ENCODE measurements at regions of chr2 and their contacts with region 1.

Region 1: GRCh38 chr2:75574114-75574513 is 13.4 kb upstream of the EVA1A start:
- DNase-seq: peak; percentile 20
- ATAC-seq: peak; percentile 69
- H3K4me3 ChIP-seq: no peak overlapping the region
- H3K27ac ChIP-seq: no peak overlapping the region
- H3K4me1 ChIP-seq: peaks cover 8% of the 10 kb centered on the region
- H3K27me3 ChIP-seq: no peaks in the 10 kb centered on the region
- CTCF ChIP-seq: peak; percentile 40
- POLR2A ChIP-seq: no peak
- RAD21 ChIP-seq: peak; percentile 37; the same call in 1 of the 2 replicates

Region 2: DNA sequence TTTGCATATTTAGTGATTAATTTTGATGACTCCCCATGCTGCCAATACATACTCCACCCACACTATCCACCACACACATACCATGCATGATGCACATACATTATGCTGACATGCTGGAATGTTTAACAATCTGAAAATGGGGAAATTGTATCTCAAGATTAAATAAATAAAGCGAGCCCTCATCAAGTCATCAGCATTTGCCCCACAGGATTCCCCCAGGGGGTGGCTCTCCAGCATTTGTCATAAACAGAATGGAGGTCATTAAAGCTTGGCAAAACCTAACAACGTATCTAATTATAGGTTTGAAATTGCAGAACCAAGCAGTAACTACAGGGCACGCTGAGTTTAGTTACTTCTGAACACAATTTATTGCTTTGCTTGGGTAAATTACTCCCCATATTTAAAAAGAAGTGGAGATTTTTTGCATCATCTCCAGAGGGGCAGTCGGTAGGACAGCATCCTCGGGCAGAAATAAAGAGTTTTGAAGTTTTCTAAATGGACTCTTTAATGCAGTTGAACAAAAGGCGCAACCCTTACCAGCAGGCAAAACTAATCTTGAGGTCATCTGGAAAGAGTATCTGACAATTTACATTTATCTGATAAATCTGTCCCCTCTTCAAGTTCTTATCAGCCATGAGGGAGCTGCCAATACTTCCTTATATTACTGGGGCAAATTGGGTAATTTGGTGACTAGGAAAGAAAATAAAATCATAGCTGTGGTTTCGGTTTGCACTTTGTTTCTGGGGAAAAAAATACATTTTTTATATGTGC is 233.4 kb before region 1 on chr2:
- CTCF ChIA-PET with region 1: no interaction called
- POLR2A ChIA-PET with region 1: no interaction called
- dilution Hi-C with region 1: no loop called
- in situ Hi-C with region 1: no loop called
- intact Hi-C with region 1: no loop called
- DNase-seq: peak; percentile 42
- ATAC-seq: peak; percentile 79
- H3K4me3 ChIP-seq: no peak overlapping the region
- H3K27ac ChIP-seq: no peak overlapping the region
- H3K4me1 ChIP-seq: no peaks in the 10 kb centered on the region; the same call in 1 of the 2 replicates
- H3K27me3 ChIP-seq: no peaks in the 10 kb centered on the region
- CTCF ChIP-seq: no peak
- POLR2A ChIP-seq: no peak
- RAD21 ChIP-seq: no peak

Region 3: DNA sequence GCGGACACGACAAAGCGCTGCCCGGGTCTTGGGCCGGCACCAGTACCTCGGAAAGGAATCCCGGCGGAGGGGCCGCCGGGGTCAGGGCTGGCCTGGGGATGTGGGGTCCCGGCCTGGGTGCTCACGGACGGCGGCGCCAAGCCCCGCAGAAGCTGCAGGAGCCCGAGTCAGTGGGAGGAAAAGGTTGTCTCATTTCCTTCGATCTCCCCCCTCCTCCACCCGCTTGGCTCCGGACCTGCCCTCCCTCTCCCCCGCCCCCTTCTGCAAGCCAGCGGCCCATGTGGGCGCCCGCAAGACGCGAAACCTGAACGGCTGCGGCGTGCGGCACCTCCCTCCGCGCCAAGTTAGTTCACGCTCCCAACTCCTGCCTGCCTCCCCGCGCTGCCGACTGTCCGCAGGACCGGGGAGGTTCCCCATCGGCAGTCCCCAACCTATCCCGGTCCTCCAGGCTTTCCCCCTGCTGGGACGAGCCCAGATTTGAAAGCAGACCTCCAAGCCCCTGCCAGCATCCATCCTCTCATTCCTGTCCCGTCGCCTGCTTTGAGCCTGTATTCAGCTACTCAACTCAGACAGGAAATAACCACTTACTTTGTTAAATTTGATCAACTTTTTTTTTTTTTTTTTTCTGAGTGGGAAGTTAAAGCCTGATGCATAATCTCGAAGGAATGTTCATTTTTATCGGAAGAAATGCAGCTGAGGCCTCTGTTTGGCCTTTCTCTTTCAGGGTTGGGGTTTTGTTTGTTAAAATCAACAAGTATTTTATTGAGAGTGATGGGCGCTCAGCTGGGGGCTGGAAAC is 13.1 kb before region 1 on chr2 and contains the start of gene EVA1A:
- CTCF ChIA-PET with region 1: interaction called, 12 read pairs
- POLR2A ChIA-PET with region 1: no interaction called
- dilution Hi-C with region 1: no loop called
- in situ Hi-C with region 1: no loop called
- intact Hi-C with region 1: no loop called
- DNase-seq: peak; percentile 81
- ATAC-seq: peak; percentile 75
- H3K4me3 ChIP-seq: peak within 1 kb of the TSS; percentile 88
- H3K27ac ChIP-seq: peak within 1 kb of the TSS; percentile 99
- H3K4me1 ChIP-seq: peaks cover 13% of the 10 kb centered on the region
- H3K27me3 ChIP-seq: no peaks in the 10 kb centered on the region
- CTCF ChIP-seq: no peak
- POLR2A ChIP-seq: peak; percentile 72
- RAD21 ChIP-seq: peak; percentile 2; the same call in 1 of the 2 replicates
- total RNA-seq, gene EVA1A: 89.2 and 93.7 TPM in 2 replicates

Region 4: DNA sequence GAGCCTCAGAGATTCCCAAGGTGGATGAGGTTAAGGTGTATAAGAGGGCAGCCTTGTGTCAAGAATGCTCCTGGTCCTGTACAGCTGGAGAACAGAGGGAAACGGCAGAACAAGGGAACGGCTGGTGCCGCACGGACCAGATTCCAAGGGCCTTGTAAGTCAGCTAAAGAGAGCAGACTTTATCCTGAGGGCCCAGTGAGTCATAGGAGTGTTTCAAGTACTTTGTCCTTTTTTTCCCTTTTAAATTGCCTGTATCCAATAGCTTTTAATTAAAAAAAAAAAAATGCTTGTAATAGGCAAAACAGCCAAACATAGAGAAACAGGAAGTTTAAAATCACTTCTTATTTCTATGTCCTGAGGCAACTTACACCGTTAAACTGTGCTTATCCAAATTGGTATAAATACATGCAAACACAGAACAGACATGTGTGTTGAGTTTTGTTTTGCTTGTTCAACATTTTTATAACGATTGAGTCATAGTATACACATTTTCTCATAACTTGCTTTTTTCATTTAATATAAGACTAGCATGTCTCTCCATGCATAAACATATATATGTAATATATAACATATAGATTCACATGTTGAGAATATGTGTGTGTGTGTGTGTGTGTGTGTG is 28.7 kb after region 1 on chr2:
- CTCF ChIA-PET with region 1: interaction called, 13 read pairs
- POLR2A ChIA-PET with region 1: interaction called, 4 read pairs
- dilution Hi-C with region 1: no loop called
- in situ Hi-C with region 1: no loop called
- intact Hi-C with region 1: no loop called
- DNase-seq: peak; percentile 88
- ATAC-seq: peak; percentile 38
- H3K4me3 ChIP-seq: no peak overlapping the region
- H3K27ac ChIP-seq: no peak overlapping the region
- H3K4me1 ChIP-seq: peaks cover 27% of the 10 kb centered on the region
- H3K27me3 ChIP-seq: no peaks in the 10 kb centered on the region
- CTCF ChIP-seq: no peak
- POLR2A ChIP-seq: no peak
- RAD21 ChIP-seq: no peak

Region 5: GRCh38 chr2:75608684-75609333 is 34.7 kb after region 1 on chr2:
- CTCF ChIA-PET with region 1: interaction called, 13 read pairs
- POLR2A ChIA-PET with region 1: no interaction called
- dilution Hi-C with region 1: no loop called
- in situ Hi-C with region 1: no loop called
- intact Hi-C with region 1: no loop called
- DNase-seq: peak; percentile 47
- ATAC-seq: peak; percentile 67
- H3K4me3 ChIP-seq: peak overlapping the region; percentile 22; the same call in 1 of the 2 replicates
- H3K27ac ChIP-seq: no peak overlapping the region
- H3K4me1 ChIP-seq: peaks cover 13% of the 10 kb centered on the region
- H3K27me3 ChIP-seq: peaks cover 24% of the 10 kb centered on the region
- CTCF ChIP-seq: peak; percentile 89
- POLR2A ChIP-seq: peak; percentile 34; the same call in 1 of the 2 replicates
- RAD21 ChIP-seq: peak; percentile 95

Region 6: DNA sequence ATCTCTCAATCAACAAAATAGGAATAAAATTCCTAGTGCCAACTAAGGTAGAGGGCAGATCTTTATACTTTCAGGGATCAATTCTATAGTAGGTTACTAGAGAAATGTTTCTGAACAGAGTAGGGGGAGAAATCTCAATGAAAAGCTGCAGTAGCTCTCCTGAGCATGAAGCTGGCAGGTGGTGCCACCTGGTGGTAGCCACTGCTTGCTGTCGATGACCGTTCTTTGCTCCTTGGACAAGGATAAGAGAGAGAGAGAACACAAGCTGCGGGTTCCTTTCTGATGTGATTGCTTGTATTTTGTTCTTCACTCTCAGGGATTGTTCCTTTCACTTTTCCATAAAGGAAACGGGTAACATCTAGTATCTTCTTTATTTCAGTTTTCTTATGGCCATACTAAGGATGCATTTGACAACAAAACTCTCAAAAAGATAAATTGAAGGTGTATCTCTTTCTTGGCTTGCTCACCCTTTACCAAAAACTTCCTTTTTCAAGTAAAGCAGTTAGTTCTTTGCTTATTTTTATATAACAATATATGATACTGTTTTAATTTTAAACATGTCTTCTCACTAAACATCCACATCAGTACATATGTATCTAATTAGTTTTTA is 53.9 kb after region 1 on chr2:
- CTCF ChIA-PET with region 1: interaction called, 12 read pairs
- POLR2A ChIA-PET with region 1: no interaction called
- dilution Hi-C with region 1: no loop called
- in situ Hi-C with region 1: no loop called
- intact Hi-C with region 1: no loop called
- DNase-seq: peak; percentile 80
- ATAC-seq: peak; percentile 97
- H3K4me3 ChIP-seq: no peak overlapping the region
- H3K27ac ChIP-seq: no peak overlapping the region
- H3K4me1 ChIP-seq: no peaks in the 10 kb centered on the region
- H3K27me3 ChIP-seq: peaks cover 18% of the 10 kb centered on the region
- CTCF ChIP-seq: peak; percentile 90
- POLR2A ChIP-seq: no peak
- RAD21 ChIP-seq: peak; percentile 93

Measured in IMR-90 (cell line).